ENCODE measurements at regions of chr4 and their contacts with region 1.

Region 1: GRCh38 chr4:40924096-40924792 is 174.5 kb downstream of the NSUN7 start:
- DNase-seq: peak; percentile 92
- H3K4me3 Mint-ChIP-seq: no peak overlapping the region
- H3K27ac Mint-ChIP-seq: peak overlapping the region; percentile 72
- H3K4me1 Mint-ChIP-seq: peaks cover 10% of the 10 kb centered on the region
- H3K27me3 Mint-ChIP-seq: peaks cover 11% of the 10 kb centered on the region

Region 2: DNA sequence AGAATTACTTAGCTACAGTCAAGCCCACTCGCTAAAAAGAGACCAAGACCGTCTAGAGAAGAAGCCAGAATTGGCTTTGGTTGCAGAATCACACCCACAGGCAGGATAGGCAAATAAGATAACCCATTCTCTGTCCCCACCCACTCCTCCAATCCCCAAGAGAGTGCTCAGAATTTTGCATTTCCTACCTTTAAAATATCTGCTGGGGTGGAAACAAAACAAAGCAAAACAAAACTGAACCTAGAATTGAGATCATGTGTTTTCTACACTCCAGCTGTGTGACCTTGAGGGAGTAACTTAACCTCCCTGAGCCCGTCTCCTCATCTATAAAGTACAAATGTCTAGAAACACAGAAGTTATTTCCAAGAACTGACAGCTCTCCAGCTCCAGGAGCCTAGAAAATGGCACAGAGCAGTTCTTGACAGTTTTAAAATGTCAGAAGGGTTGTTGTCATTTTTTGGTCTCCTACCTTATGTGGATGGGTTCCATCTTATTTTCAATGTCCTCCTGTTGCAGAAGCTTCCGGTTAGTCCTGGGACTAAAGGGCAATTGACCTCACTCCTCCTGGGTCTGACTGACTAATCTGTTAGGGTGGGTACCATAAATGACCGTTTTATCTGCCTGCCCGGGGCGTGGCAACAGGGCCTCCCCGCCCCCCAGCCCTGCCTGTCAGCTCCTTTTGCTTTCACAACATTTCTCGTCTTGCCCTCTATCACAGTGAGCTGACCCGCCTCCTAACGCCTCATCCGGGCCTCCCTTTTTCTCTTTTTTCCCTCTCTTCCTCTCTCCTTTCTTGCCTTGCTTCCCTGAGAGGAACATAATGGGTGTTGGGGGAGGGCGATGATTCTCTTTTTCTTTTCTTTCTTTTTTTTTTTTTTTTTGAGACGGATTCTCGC is 408.6 kb before region 1 on chr4:
- CTCF ChIA-PET with region 1: no interaction called
- intact Hi-C with region 1: no loop called
- DNase-seq: peak; percentile 16
- H3K4me3 Mint-ChIP-seq: no peak overlapping the region
- H3K27ac Mint-ChIP-seq: no peak overlapping the region
- H3K4me1 Mint-ChIP-seq: peaks cover 16% of the 10 kb centered on the region
- H3K27me3 Mint-ChIP-seq: no peaks in the 10 kb centered on the region

Region 3: GRCh38 chr4:40897557-40898203 is 26.6 kb before region 1 on chr4:
- CTCF ChIA-PET with region 1: interaction called, 21 read pairs
- intact Hi-C with region 1: loop called (anchors 1 kb)
- DNase-seq: peak; percentile 79
- H3K4me3 Mint-ChIP-seq: peak overlapping the region; percentile 62
- H3K27ac Mint-ChIP-seq: peak overlapping the region; percentile 59
- H3K4me1 Mint-ChIP-seq: peaks cover 4% of the 10 kb centered on the region
- H3K27me3 Mint-ChIP-seq: no peaks in the 10 kb centered on the region

Region 4: GRCh38 chr4:41214136-41214824 is 290.0 kb after region 1 on chr4 and contains the start of gene APBB2:
- CTCF ChIA-PET with region 1: interaction called, 24 read pairs
- intact Hi-C with region 1: loop called (anchors 1 kb)
- DNase-seq: peak; percentile 66
- H3K4me3 Mint-ChIP-seq: peak within 1 kb of the TSS; percentile 79
- H3K27ac Mint-ChIP-seq: no peak within 1 kb of the TSS
- H3K4me1 Mint-ChIP-seq: peaks cover 22% of the 10 kb centered on the region
- H3K27me3 Mint-ChIP-seq: peaks cover 47% of the 10 kb centered on the region
- total RNA-seq, gene APBB2: 4.5 to 4.8 TPM

Region 5: GRCh38 chr4:41360214-41360920 is 436.1 kb after region 1 on chr4:
- CTCF ChIA-PET with region 1: no interaction called
- intact Hi-C with region 1: no loop called
- DNase-seq: no peak
- H3K4me3 Mint-ChIP-seq: no peak overlapping the region
- H3K27ac Mint-ChIP-seq: no peak overlapping the region
- H3K4me1 Mint-ChIP-seq: no peaks in the 10 kb centered on the region
- H3K27me3 Mint-ChIP-seq: peaks cover 40% of the 10 kb centered on the region

Region 6: DNA sequence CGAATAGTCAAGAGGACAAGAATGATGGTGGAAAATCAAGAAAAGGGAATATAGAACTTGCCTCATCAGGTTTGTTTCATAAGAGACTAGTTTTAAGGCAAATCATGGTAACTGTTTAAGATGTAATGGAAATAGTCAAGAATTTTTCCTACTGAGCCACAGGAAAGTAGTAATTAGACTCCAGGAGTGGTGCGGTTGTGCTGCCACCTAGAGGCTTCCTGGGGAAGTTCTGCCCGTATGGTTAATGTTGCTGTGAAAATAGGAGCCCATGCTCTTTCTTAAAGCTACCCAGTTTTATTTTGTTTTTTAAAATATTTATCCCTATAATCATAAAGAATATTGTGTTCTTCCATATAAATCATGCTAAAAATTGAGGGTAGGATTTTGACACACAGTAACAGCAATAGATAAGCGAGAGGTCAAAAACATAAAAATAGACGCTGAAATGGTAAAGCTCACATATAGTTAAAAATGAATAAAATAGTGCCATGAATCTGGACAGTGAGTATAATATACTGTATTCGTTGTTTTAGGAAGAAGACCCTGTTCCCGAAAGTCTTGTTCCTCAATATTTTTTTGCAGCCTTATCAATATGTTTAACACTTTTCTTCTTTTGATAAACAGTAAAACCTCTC is 737.3 kb after region 1 on chr4:
- CTCF ChIA-PET with region 1: interaction called, 5 read pairs
- intact Hi-C with region 1: loop called (anchors 1 kb)
- DNase-seq: peak; percentile 66
- H3K4me3 Mint-ChIP-seq: no peak overlapping the region
- H3K27ac Mint-ChIP-seq: no peak overlapping the region
- H3K4me1 Mint-ChIP-seq: peaks cover 4% of the 10 kb centered on the region
- H3K27me3 Mint-ChIP-seq: peaks cover 2% of the 10 kb centered on the region

Measured in activated naive CD4-positive, alpha-beta T cell treated with anti-CD3 and anti-CD28 coated beads for 36 hours (primary cell).